ENCODE measurements at regions of chr1 and their contacts with region 1.

Region 1: DNA sequence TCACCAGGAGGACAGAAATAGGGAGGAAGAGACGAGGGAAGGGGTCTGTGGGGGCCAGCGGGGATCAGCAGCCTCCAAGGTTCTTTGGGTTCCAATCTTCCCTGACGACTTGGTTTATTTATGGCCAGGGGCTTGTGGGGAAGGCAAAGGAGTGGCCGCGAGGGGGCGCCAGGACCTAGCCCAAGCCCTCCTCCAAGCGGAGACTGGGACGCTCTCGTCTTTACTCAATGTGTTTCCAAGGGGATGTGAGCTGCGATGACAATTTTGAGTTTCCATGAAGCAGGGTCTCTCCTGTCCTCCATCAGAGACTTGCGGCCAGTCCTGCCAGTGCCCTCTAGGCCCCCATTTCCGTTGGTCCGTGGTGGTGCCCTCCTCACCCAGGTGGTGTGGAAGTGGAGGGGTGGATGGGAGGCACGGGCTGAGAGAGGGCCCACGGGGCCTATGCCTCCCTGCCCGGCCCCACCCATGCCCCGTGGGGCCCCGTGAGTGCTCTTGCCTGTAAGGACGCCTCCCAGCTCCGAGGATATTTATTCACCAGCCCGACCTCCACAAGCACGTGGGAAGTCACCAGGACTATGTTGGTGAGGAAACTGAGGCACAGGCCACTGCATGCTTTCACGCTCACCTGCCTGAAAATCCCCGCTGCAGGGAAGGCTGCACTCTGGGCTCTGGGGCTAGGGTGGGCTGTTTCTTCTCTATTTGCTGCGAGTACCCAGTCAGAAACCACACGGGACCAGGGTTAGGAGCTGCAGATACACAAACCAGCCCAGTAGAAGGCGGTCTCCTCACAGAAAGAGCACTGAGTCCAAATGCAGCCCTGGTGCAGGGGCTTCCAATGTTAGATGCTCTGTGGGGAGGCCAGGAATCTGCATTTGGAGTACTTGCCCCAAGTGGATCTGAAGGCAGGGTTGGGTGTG is 26.5 kb downstream of the DMRTB1 start:
- DNase-seq: peak; percentile 60
- ATAC-seq: peak; percentile 97
- H3K4me3 ChIP-seq: peak overlapping the region in 1 of 2 experiments; percentile 20; a peak in 2 of 4 replicates
- H3K27ac ChIP-seq: no peak overlapping the region
- H3K4me1 ChIP-seq: peaks cover 0 to 5% of the 10 kb centered on the region in 2 experiments; a peak in 1 of 4 replicates
- H3K27me3 ChIP-seq: no peaks in the 10 kb centered on the region
- CTCF ChIP-seq: peak; percentile 92 to 95 (median 94)
- POLR2A ChIP-seq: no peak
- RAD21 ChIP-seq: peak; percentile 96

Region 2: GRCh38 chr1:53278201-53278725 is 207.5 kb before region 1 on chr1:
- CTCF ChIA-PET with region 1: no interaction called
- POLR2A ChIA-PET with region 1: no interaction called
- RAD21 ChIA-PET with region 1: no interaction called
- intact Hi-C with region 1: loop called (anchors 1 kb)
- DNase-seq: no peak
- ATAC-seq: peak; percentile 86
- H3K4me3 ChIP-seq: no peak overlapping the region
- H3K27ac ChIP-seq: no peak overlapping the region
- H3K4me1 ChIP-seq: peaks cover 0 to 9% of the 10 kb centered on the region in 2 experiments; a peak in 1 of 4 replicates
- H3K27me3 ChIP-seq: no peaks in the 10 kb centered on the region
- CTCF ChIP-seq: peak; percentile 78 to 93 (median 90)
- POLR2A ChIP-seq: no peak
- RAD21 ChIP-seq: peak; percentile 91

Region 3: GRCh38 chr1:53681977-53682685 is 196.4 kb after region 1 on chr1:
- CTCF ChIA-PET with region 1: interaction called, 31 read pairs
- POLR2A ChIA-PET with region 1: no interaction called
- RAD21 ChIA-PET with region 1: interaction called in 1 of 2 experiments, 12 read pairs
- intact Hi-C with region 1: loop called (anchors 1 kb)
- DNase-seq: peak; percentile 27
- ATAC-seq: peak; percentile 80
- H3K4me3 ChIP-seq: no peak overlapping the region
- H3K27ac ChIP-seq: no peak overlapping the region
- H3K4me1 ChIP-seq: peaks cover 24 to 25% of the 10 kb centered on the region in 2 experiments
- H3K27me3 ChIP-seq: peaks cover 4% of the 10 kb centered on the region; the same call in 1 of the 2 replicates
- CTCF ChIP-seq: peak; percentile 79 to 84 (median 82); a peak in 5 of 6 replicates
- POLR2A ChIP-seq: no peak
- RAD21 ChIP-seq: peak; percentile 86

Region 4: GRCh38 chr1:53754484-53755312 is 269.0 kb after region 1 on chr1:
- CTCF ChIA-PET with region 1: interaction called, 22 read pairs
- POLR2A ChIA-PET with region 1: no interaction called
- RAD21 ChIA-PET with region 1: no interaction called
- intact Hi-C with region 1: loop called (anchors 1 kb)
- DNase-seq: peak; percentile 32
- ATAC-seq: peak; percentile 73
- H3K4me3 ChIP-seq: no peak overlapping the region
- H3K27ac ChIP-seq: no peak overlapping the region
- H3K4me1 ChIP-seq: no peaks in the 10 kb centered on the region
- H3K27me3 ChIP-seq: no peaks in the 10 kb centered on the region
- CTCF ChIP-seq: peak; percentile 64 to 82 (median 70); a peak in 5 of 6 replicates
- POLR2A ChIP-seq: no peak
- RAD21 ChIP-seq: peak; percentile 71

Region 5: GRCh38 chr1:53765657-53766056 is 279.9 kb after region 1 on chr1:
- CTCF ChIA-PET with region 1: no interaction called
- POLR2A ChIA-PET with region 1: no interaction called
- RAD21 ChIA-PET with region 1: no interaction called
- intact Hi-C with region 1: loop called (anchors 5 kb)
- DNase-seq: no peak
- ATAC-seq: no peak
- H3K4me3 ChIP-seq: no peak overlapping the region
- H3K27ac ChIP-seq: no peak overlapping the region
- H3K4me1 ChIP-seq: no peaks in the 10 kb centered on the region
- H3K27me3 ChIP-seq: no peaks in the 10 kb centered on the region
- CTCF ChIP-seq: no peak
- POLR2A ChIP-seq: no peak
- RAD21 ChIP-seq: no peak

Region 6: DNA sequence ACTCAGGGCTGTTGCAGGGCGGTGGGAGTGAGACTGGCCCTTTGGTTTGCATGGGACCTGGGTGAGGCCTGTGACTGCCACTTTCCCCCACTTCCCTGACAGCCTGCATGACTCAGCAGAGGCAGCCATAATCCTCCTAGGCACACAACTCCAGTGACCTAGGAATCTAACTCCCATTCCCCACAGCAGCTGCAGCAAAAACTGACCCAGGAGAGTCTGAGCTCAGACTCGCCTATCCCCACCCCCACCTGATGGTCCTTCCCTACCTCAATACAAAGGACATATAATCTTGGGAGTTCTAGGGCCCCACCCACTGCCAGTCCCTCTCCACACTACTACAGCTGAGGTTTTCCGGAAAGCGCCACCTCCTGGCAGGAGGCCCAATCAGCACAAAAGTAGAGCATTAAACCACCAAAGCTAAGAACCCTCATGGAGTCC is 325.7 kb after region 1 on chr1:
- CTCF ChIA-PET with region 1: no interaction called
- POLR2A ChIA-PET with region 1: no interaction called
- RAD21 ChIA-PET with region 1: no interaction called
- intact Hi-C with region 1: loop called (anchors 10 kb)
- DNase-seq: peak; percentile 15
- ATAC-seq: peak; percentile 89
- H3K4me3 ChIP-seq: no peak overlapping the region
- H3K27ac ChIP-seq: peak overlapping the region; percentile 51
- H3K4me1 ChIP-seq: peaks cover 4 to 21% of the 10 kb centered on the region in 2 experiments
- H3K27me3 ChIP-seq: no peaks in the 10 kb centered on the region
- CTCF ChIP-seq: peak in 2 of 3 experiments; percentile 53 to 68; a peak in 4 of 6 replicates
- POLR2A ChIP-seq: no peak
- RAD21 ChIP-seq: no peak

Region 7: GRCh38 chr1:53959664-53960250 is 474.0 kb after region 1 on chr1:
- CTCF ChIA-PET with region 1: interaction called, 4 read pairs
- POLR2A ChIA-PET with region 1: no interaction called
- RAD21 ChIA-PET with region 1: no interaction called
- intact Hi-C with region 1: loop called (anchors 10 kb)
- DNase-seq: no peak
- ATAC-seq: 0 out of 2 replicates have a peak, but pooled peaks have one; percentile 31
- H3K4me3 ChIP-seq: no peak overlapping the region
- H3K27ac ChIP-seq: no peak overlapping the region
- H3K4me1 ChIP-seq: peaks cover 26 to 34% of the 10 kb centered on the region in 2 experiments
- H3K27me3 ChIP-seq: no peaks in the 10 kb centered on the region
- CTCF ChIP-seq: peak; percentile 57 to 81 (median 68)
- POLR2A ChIP-seq: no peak
- RAD21 ChIP-seq: peak; percentile 75

Measured in HCT116 (cell line).